ENCODE measurements at regions of chr3 and their contacts with region 1.

Region 1: DNA sequence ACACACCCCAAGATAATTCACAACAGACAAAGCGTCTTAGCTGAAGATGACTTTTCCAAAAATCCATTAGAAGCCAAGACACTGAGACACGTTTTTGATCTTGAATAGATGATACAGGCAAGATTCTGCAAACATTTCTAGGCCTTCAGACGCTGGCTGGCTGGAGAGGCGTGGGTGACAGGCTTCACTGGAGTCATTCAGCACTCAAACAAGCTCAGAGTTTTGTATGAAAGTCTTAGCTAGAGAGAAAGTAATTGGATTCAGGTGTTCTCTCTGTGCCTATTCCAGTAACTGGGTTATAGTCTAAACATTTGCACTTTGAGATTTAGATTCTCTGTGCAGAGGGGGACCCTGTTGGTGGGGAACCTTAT is 147.7 kb upstream of the BHLHE40 start:
- DNase-seq: peak in 13 of 35 experiments; percentile 14 to 43 (median 26)
- ATAC-seq: peak; percentile 22 to 35 (median 30)
- H3K4me3 ChIP-seq: peak overlapping the region; percentile 20 to 36
- H3K4me3 Mint-ChIP-seq: peak overlapping the region; percentile 72 to 83 (median 82)
- H3K27ac ChIP-seq: peak overlapping the region; percentile 73
- H3K27ac Mint-ChIP-seq: peak overlapping the region; percentile 94 to 99
- H3K4me1 ChIP-seq: peaks cover 68 to 86% of the 10 kb centered on the region in 2 experiments
- H3K4me1 Mint-ChIP-seq: peaks cover 93 to 94% (median 93%) of the 10 kb centered on the region in 3 donors
- H3K27me3 ChIP-seq: no peaks in the 10 kb centered on the region
- H3K27me3 Mint-ChIP-seq: no peaks in the 10 kb centered on the region

Region 2: GRCh38 chr3:4888913-4889846 is 57.6 kb after region 1 on chr3:
- CTCF ChIA-PET with region 1: no interaction called
- POLR2A ChIA-PET with region 1: interaction called in 1 of 2 experiments, 10 read pairs
- DNase-seq: peak in 16 of 35 experiments; percentile 5 to 72 (median 18)
- ATAC-seq: peak; percentile 73 to 94 (median 84)
- H3K4me3 ChIP-seq: no peak overlapping the region
- H3K4me3 Mint-ChIP-seq: peak overlapping the region in 1 of 3 donors; percentile 7
- H3K27ac ChIP-seq: peak overlapping the region; percentile 38
- H3K27ac Mint-ChIP-seq: peak overlapping the region; percentile 70 to 82
- H3K4me1 ChIP-seq: peaks cover 7 to 13% of the 10 kb centered on the region in 2 experiments
- H3K4me1 Mint-ChIP-seq: peaks cover 17 to 22% (median 20%) of the 10 kb centered on the region in 3 donors
- H3K27me3 ChIP-seq: no peaks in the 10 kb centered on the region
- H3K27me3 Mint-ChIP-seq: no peaks in the 10 kb centered on the region

Region 3: GRCh38 chr3:4899710-4900109 is 68.1 kb after region 1 on chr3:
- CTCF ChIA-PET with region 1: no interaction called
- POLR2A ChIA-PET with region 1: no interaction called
- DNase-seq: no peak
- ATAC-seq: peak in 1 of 4 experiments; percentile 24
- H3K4me3 ChIP-seq: no peak overlapping the region
- H3K4me3 Mint-ChIP-seq: no peak overlapping the region
- H3K27ac ChIP-seq: no peak overlapping the region
- H3K27ac Mint-ChIP-seq: peak overlapping the region; percentile 39 to 69
- H3K4me1 ChIP-seq: peaks cover 7% of the 10 kb centered on the region in 2 experiments
- H3K4me1 Mint-ChIP-seq: peaks cover 30 to 49% (median 35%) of the 10 kb centered on the region in 3 donors
- H3K27me3 ChIP-seq: no peaks in the 10 kb centered on the region
- H3K27me3 Mint-ChIP-seq: no peaks in the 10 kb centered on the region

Measured in T-cell (primary cell).